Psoas muscle (tissue), 8 donors: ENCODE measurements at regions of chr14 and their contacts with region 1.

Region 1: GRCh38 chr14:75654127-75654732 is 6.4 kb downstream of the ERG28 start:
- DNase-seq: peak; percentile 76 to 87
- ATAC-seq: peak; percentile 88 to 92 (median 91)
- H3K4me3 ChIP-seq: no peak overlapping the region
- H3K27ac ChIP-seq: no peak overlapping the region
- H3K4me1 ChIP-seq: peaks cover 22% of the 10 kb centered on the region
- H3K27me3 ChIP-seq: no peaks in the 10 kb centered on the region
- CTCF ChIP-seq: peak; percentile 98

Region 2: GRCh38 chr14:75577729-75578101 is 76.5 kb before region 1 on chr14:
- intact Hi-C with region 1: loop called (anchors 1 kb)
- DNase-seq: peak; percentile 88 to 94
- ATAC-seq: peak; percentile 83 to 89 (median 86)
- H3K4me3 ChIP-seq: peak overlapping the region; percentile 69
- H3K27ac ChIP-seq: peak overlapping the region; percentile 87
- H3K4me1 ChIP-seq: peaks cover 22% of the 10 kb centered on the region
- H3K27me3 ChIP-seq: no peaks in the 10 kb centered on the region
- CTCF ChIP-seq: peak; percentile 82

Region 3: DNA sequence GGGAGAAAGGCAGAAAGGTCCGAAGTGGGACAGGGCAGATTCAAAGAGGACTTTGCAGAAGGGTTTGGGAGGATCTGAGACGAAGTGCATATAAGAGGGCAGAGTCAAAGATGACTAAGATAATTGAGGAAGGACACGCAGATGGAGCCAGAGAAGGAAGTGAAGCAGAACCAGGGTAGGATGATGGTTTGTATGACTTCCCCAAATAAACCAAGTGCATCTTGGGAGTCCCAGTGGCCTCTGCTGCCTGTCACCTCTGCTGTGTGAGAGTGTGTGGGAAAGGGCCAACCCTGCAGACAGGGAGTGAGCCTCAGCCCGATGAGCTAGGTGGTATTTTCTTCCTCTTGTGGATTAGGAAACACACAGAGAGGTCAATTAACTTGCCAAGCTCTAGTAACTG is 39.0 kb before region 1 on chr14:
- intact Hi-C with region 1: no loop called
- DNase-seq: no peak
- ATAC-seq: peak in 1 of 4 donors; percentile 26
- H3K4me3 ChIP-seq: no peak overlapping the region
- H3K27ac ChIP-seq: no peak overlapping the region
- H3K4me1 ChIP-seq: peaks cover 5% of the 10 kb centered on the region
- H3K27me3 ChIP-seq: no peaks in the 10 kb centered on the region
- CTCF ChIP-seq: no peak

Region 4: GRCh38 chr14:75689012-75689411 is 34.8 kb after region 1 on chr14:
- intact Hi-C with region 1: no loop called
- DNase-seq: peak; percentile 65 to 77
- ATAC-seq: peak in 2 of 4 donors; percentile 31 to 52
- H3K4me3 ChIP-seq: no peak overlapping the region
- H3K27ac ChIP-seq: no peak overlapping the region
- H3K4me1 ChIP-seq: no peaks in the 10 kb centered on the region
- H3K27me3 ChIP-seq: no peaks in the 10 kb centered on the region
- CTCF ChIP-seq: no peak

Region 5: GRCh38 chr14:75831458-75831857 is 177.2 kb after region 1 on chr14:
- intact Hi-C with region 1: no loop called
- DNase-seq: peak; percentile 56 to 61
- ATAC-seq: peak in 3 of 4 donors; percentile 68 to 82 (median 70)
- H3K4me3 ChIP-seq: no peak overlapping the region
- H3K27ac ChIP-seq: no peak overlapping the region
- H3K4me1 ChIP-seq: no peaks in the 10 kb centered on the region
- H3K27me3 ChIP-seq: no peaks in the 10 kb centered on the region
- CTCF ChIP-seq: no peak

Region 6: DNA sequence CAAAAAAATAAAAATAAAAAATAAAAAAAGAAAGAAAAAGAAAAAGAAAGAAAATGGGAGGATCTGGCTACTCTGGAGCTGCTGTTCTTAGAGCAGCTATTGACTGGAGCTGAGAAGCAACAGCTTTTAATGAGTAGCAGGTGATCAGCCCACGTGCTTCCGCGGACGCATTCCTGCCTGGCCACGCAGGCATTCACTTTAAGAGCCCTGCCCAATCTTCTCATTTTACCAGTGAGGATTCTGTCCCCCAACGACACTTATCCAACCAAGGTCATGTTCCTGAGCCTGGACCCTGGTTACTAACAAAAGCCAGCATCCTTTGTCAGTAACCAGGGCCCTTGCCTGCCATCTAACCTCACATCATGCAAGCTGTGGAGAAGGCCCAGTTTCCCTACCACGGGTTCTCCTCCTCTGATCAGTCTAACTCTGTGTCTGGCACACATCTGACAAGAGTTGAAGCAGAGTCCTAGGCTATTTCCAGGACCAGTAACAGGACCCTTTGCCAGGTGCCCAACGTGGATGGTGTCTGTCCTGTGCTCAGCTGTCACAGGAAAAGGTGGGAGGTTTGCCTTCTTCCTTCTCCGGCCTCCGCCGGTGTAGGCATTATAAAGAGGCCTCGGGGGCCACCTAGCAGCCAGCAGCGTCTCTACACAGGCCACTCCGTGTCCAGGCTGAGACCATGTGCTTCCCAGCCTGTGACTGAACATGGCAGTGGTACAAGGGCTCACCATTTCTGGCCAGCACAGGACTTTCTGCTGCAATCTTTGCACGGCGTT is 436.6 kb after region 1 on chr14:
- intact Hi-C with region 1: no loop called
- DNase-seq: peak; percentile 70 to 89
- ATAC-seq: peak; percentile 88 to 93 (median 90)
- H3K4me3 ChIP-seq: no peak overlapping the region
- H3K27ac ChIP-seq: peak overlapping the region; percentile 91
- H3K4me1 ChIP-seq: peaks cover 57% of the 10 kb centered on the region
- H3K27me3 ChIP-seq: no peaks in the 10 kb centered on the region
- CTCF ChIP-seq: peak; percentile 64